ENCODE measurements at regions of chrX and their contacts with region 1.

Region 1: GRCh38 chrX:148825686-148826085 is 325.3 kb downstream of the AFF2 start:
- DNase-seq: no peak
- H3K4me3 ChIP-seq: no peak overlapping the region
- H3K27ac ChIP-seq: no peak overlapping the region
- H3K4me1 ChIP-seq: no peaks in the 10 kb centered on the region
- H3K27me3 ChIP-seq: no peaks in the 10 kb centered on the region
- CTCF ChIP-seq: no peak
- EP300 ChIP-seq: no peak
- POLR2A ChIP-seq: no peak

Region 2: DNA sequence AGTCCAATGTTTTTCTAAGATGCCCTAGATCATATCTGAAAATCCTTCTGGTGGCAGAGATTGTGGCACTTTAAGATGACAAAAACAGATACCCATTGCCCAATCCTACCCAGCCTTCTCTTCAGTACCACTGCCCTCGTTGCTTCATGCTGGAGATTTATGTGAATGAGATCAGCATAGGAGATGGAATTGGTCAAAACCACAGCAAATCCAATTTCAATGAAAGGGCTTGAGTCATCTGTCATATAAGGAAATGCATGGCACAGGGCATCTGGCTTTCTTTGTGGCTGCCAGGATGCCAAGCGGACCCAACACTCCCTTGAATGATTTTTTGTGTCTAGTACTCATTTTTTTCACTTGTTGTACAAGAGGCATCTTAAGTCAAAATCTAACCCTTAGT is 308.5 kb before region 1 on chrX:
- intact Hi-C with region 1: loop called in 1 of 4 experiments (anchors 10 kb)
- DNase-seq: no peak
- H3K4me3 ChIP-seq: no peak overlapping the region
- H3K27ac ChIP-seq: no peak overlapping the region
- H3K4me1 ChIP-seq: no peaks in the 10 kb centered on the region
- H3K27me3 ChIP-seq: no peaks in the 10 kb centered on the region
- CTCF ChIP-seq: no peak
- EP300 ChIP-seq: no peak
- POLR2A ChIP-seq: no peak